ENCODE measurements at regions of chr2 and their contacts with region 1.

Region 1: DNA sequence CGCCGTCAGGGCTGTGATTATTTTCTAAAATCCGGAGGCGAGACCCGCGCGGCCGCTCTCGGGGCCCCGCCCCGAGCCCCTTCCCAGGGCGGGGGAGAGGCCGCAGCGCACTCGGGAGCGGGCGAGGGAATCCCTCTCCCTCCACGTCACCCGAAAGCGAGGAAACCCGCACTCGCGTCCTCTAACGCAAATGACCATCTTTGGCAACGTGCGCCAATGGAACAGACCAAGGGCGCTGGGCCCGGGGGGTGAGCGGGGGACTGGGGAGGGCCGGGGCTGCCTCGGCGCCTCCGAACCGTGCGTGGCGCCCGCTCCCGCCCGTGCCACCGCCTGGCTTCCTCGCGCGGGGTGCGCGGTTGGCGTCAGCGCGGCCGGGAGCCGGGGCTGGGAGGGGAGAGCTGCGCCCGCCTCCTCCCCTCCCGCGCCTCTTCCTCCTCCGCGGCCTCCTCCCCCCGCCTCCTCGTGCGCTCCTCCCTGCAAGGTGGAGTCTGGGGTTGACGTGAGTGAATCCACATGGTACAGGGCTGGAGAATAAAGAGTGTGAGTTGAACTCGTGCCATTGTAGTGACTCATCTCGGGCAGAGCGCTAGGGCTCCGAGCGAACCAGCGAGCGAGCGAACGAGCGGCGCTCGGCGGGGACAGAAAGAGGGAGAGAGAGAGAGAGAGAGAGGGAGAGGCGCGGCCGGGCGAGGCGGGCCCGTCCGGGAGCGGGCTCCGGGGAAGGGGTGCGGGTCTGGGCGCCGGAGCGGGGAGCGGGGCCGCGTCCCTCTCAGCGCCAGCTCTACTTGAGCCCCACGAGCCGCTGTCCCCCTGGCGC is at the start of gene FOSL2:
- DNase-seq: peak; percentile 100
- ATAC-seq: peak; percentile 62
- H3K4me3 ChIP-seq: peak within 1 kb of the TSS; percentile 91
- H3K27ac ChIP-seq: peak within 1 kb of the TSS; percentile 93
- H3K4me1 ChIP-seq: peaks cover 12% of the 10 kb centered on the region
- H3K27me3 ChIP-seq: no peaks in the 10 kb centered on the region
- CTCF ChIP-seq: 0 out of 2 replicates have a peak, but pooled peaks have one; percentile 5
- POLR2A ChIP-seq: peak; percentile 41; the same call in 1 of the 2 replicates
- RAD21 ChIP-seq: peak; percentile 30
- total RNA-seq, gene FOSL2: 31.4 and 32.2 TPM in 2 replicates

Region 2: GRCh38 chr2:27723372-27724144 is 668.9 kb before region 1 on chr2:
- CTCF ChIA-PET with region 1: no interaction called
- POLR2A ChIA-PET with region 1: no interaction called
- dilution Hi-C with region 1: no loop called
- in situ Hi-C with region 1: no loop called
- intact Hi-C with region 1: loop called (anchors 1 kb)
- DNase-seq: peak; percentile 75
- ATAC-seq: peak; percentile 84
- H3K4me3 ChIP-seq: no peak overlapping the region
- H3K27ac ChIP-seq: no peak overlapping the region
- H3K4me1 ChIP-seq: peaks cover 12% of the 10 kb centered on the region
- H3K27me3 ChIP-seq: no peaks in the 10 kb centered on the region
- CTCF ChIP-seq: peak; percentile 77
- POLR2A ChIP-seq: no peak
- RAD21 ChIP-seq: peak; percentile 76

Region 3: DNA sequence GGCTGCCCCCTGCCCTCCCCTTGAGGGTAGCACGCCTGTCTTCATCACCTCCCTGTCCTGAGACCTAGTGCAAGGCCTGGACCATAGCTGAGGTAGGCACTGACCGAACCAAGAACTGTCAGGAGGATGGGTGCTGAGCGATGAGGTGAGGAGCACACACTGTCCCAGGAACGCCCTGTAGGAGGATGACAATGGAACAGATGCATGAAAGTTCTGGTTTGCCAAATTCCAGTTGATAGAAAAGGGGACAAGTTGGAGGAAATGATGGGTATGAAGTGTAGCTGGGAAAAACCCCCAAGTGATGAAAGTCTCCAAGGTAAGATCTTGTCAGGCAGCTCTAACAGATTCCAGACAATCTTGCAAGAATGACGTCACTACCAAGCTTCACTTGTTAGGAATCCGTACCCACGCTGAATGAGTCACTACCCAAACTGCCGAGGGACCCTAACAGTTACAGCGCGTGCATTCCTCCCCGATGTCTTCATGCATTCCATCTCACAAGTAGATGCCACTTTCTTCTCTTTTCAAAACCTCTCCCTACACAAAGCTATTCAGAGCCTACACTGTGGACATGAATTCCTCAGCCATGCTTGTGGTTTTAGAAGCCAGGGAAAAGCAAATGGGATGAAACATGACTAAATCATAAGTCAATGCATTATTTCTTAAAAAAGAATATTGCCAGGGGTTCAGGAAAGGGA is 593.4 kb before region 1 on chr2:
- CTCF ChIA-PET with region 1: no interaction called
- POLR2A ChIA-PET with region 1: no interaction called
- dilution Hi-C with region 1: no loop called
- in situ Hi-C with region 1: no loop called
- intact Hi-C with region 1: loop called (anchors 1 kb)
- DNase-seq: peak; percentile 100
- ATAC-seq: peak; percentile 90
- H3K4me3 ChIP-seq: no peak overlapping the region
- H3K27ac ChIP-seq: peak overlapping the region; percentile 96
- H3K4me1 ChIP-seq: peaks cover 48% of the 10 kb centered on the region
- H3K27me3 ChIP-seq: no peaks in the 10 kb centered on the region
- CTCF ChIP-seq: no peak
- POLR2A ChIP-seq: no peak
- RAD21 ChIP-seq: peak; percentile 26; the same call in 1 of the 2 replicates

Region 4: DNA sequence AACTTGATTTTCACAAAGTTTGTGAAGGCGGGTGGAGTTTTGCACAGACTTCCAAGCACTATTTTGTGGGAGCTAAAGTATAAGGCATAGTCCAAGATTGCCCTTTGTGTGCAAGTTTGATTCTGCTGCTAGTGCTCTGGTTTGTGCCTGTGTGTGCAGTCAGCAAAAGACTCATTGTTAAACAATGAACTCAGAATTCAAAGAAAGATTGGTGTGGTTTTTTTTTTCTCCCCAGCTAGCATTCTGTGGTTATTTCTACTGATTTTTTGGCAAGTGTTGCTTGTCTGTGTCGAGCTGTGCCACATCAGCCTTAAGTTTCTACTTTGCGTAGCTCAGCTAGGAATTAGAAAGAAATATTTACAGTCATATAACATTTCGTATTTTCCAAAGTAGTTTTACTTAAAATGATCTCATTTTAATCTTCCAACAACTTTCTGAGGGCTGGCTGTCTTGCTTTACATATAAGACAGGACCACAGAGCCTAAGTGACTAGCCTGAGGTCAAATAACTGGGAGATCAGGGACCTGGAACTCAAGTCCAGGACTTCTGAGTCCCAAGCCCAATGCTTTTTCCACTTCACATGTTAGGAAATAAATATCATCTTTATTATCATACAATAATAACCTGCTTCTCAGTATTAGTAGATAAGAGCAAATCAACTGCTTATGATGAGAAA is 432.1 kb before region 1 on chr2:
- CTCF ChIA-PET with region 1: no interaction called
- POLR2A ChIA-PET with region 1: no interaction called
- dilution Hi-C with region 1: no loop called
- in situ Hi-C with region 1: loop called (anchors 10 kb)
- intact Hi-C with region 1: loop called (anchors 1 kb)
- DNase-seq: peak; percentile 93
- ATAC-seq: peak; percentile 71
- H3K4me3 ChIP-seq: no peak overlapping the region
- H3K27ac ChIP-seq: peak overlapping the region; percentile 75
- H3K4me1 ChIP-seq: peaks cover 16% of the 10 kb centered on the region
- H3K27me3 ChIP-seq: no peaks in the 10 kb centered on the region
- CTCF ChIP-seq: no peak
- POLR2A ChIP-seq: no peak
- RAD21 ChIP-seq: no peak

Region 5: GRCh38 chr2:28233164-28233676 is 159.3 kb before region 1 on chr2:
- CTCF ChIA-PET with region 1: no interaction called
- POLR2A ChIA-PET with region 1: no interaction called
- dilution Hi-C with region 1: no loop called
- in situ Hi-C with region 1: no loop called
- intact Hi-C with region 1: loop called (anchors 5 kb)
- DNase-seq: peak; percentile 81
- ATAC-seq: peak; percentile 87
- H3K4me3 ChIP-seq: no peak overlapping the region
- H3K27ac ChIP-seq: peak overlapping the region; percentile 94; the same call in 1 of the 2 replicates
- H3K4me1 ChIP-seq: peaks cover 14% of the 10 kb centered on the region
- H3K27me3 ChIP-seq: no peaks in the 10 kb centered on the region
- CTCF ChIP-seq: no peak
- POLR2A ChIP-seq: no peak
- RAD21 ChIP-seq: no peak

Region 6: DNA sequence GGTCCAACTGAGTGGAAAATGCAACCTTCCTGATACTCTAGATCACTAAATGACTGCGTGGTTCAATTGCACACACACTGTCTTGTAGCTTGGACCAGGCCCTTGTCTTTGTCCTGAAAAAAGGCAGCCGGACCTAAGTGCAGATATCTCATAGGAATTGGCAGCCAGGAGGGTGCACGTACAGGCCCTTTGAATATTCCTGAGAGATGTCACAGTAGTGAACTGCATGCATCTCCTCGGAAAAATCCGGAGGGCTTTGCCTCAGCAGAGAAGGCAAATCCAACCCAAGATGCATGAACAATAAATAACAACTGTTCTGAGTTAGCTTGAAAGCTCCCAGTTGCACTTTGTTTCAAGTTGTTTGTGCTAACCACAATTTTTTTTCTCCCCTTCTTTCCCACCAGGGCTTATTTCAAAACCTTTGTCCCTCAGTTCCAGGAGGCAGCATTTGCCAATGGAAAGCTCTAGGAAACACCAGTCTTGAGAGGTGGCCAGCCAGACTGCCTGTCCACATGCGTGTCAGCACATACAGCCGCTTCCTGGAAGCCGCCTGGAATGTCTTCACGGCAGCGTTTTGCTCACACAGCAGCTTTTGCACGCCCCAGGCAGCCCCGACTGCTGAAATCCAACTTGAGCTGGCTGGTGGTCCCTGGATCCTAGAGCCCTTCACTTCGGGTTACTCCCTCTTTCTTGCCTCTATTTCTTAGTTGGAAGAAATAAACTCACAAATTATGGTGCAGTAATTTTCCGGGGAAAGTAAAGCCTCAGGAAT is 54.3 kb before region 1 on chr2:
- CTCF ChIA-PET with region 1: no interaction called
- POLR2A ChIA-PET with region 1: no interaction called
- dilution Hi-C with region 1: no loop called
- in situ Hi-C with region 1: no loop called
- intact Hi-C with region 1: loop called (anchors 2 kb)
- DNase-seq: peak; percentile 85
- ATAC-seq: peak; percentile 79
- H3K4me3 ChIP-seq: no peak overlapping the region
- H3K27ac ChIP-seq: peak overlapping the region; percentile 70; the same call in 1 of the 2 replicates
- H3K4me1 ChIP-seq: peaks cover 24% of the 10 kb centered on the region
- H3K27me3 ChIP-seq: no peaks in the 10 kb centered on the region
- CTCF ChIP-seq: no peak
- POLR2A ChIP-seq: no peak
- RAD21 ChIP-seq: peak; percentile 14; the same call in 1 of the 2 replicates